B cell (primary cell): ENCODE measurements at regions of chr15 and their contacts with region 1.

Region 1: GRCh38 chr15:50315814-50316630 is 39.0 kb downstream of the GABPB1 start:
- DNase-seq: peak; percentile 57
- ATAC-seq: no peak
- H3K4me3 ChIP-seq: no peak overlapping the region
- H3K4me3 Mint-ChIP-seq: no peak overlapping the region
- H3K27ac ChIP-seq: no peak overlapping the region
- H3K27ac Mint-ChIP-seq: no peak overlapping the region
- H3K4me1 ChIP-seq: no peaks in the 10 kb centered on the region
- H3K4me1 Mint-ChIP-seq: peaks cover 12% of the 10 kb centered on the region
- H3K27me3 ChIP-seq: no peaks in the 10 kb centered on the region
- H3K27me3 Mint-ChIP-seq: no peaks in the 10 kb centered on the region
- CTCF ChIP-seq: peak; percentile 95

Region 2: DNA sequence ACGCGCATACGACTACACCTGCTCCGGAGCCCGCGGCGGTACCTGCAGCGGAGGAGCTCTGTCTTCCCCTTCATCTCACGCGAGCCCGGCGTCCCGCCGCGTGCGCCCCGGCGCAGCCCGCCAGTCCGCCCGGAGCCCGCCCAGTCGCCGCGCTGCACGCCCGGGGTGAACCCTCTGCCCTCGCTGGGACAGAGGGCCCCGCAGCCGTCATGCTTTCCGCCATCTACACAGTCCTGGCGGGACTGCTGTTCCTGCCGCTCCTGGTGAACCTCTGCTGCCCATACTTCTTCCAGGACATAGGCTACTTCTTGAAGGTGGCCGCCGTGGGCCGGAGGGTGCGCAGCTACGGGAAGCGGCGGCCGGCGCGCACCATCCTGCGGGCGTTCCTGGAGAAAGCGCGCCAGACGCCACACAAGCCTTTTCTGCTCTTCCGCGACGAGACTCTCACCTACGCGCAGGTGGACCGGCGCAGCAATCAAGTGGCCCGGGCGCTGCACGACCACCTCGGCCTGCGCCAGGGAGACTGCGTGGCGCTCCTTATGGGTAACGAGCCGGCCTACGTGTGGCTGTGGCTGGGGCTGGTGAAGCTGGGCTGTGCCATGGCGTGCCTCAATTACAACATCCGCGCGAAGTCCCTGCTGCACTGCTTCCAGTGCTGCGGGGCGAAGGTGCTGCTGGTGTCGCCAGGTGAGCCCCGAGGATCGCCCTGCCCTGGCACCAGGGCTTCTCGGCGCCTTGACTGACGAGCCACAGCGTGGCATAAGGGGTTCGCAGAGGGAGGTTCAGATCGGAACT is 133.6 kb before region 1 on chr15:
- CTCF ChIA-PET with region 1: interaction called, 8 read pairs
- POLR2A ChIA-PET with region 1: no interaction called
- intact Hi-C with region 1: loop called (anchors 2 kb)
- DNase-seq: peak; percentile 60
- ATAC-seq: no peak
- H3K4me3 ChIP-seq: peak overlapping the region; percentile 35 to 58 (median 49)
- H3K4me3 Mint-ChIP-seq: peak overlapping the region; percentile 92
- H3K27ac ChIP-seq: no peak overlapping the region
- H3K27ac Mint-ChIP-seq: no peak overlapping the region
- H3K4me1 ChIP-seq: peaks cover 7 to 11% of the 10 kb centered on the region in 2 donors
- H3K4me1 Mint-ChIP-seq: peaks cover 14% of the 10 kb centered on the region
- H3K27me3 ChIP-seq: peaks cover 0 to 17% (median 5%) of the 10 kb centered on the region in 4 experiments
- H3K27me3 Mint-ChIP-seq: peaks cover 32% of the 10 kb centered on the region
- CTCF ChIP-seq: no peak

Region 3: DNA sequence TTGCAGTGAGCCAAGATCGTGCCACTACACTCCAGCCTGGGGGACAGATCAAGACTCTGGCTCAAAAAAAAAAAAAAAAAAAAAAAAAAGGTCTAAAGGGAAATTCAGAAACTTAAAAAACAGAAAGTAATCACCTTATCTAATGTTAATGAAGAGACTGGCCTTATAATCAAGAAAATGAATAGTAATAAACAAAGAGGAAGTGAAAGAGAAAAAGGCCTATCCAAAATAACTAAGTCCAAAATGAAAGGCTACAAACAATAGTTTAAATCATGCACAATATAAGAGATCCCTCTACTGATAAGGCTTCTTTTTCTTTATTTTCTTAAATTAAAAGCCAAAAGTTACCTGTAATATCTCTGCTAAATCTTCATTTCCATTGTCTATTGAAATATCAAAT is 13.4 kb before region 1 on chr15:
- CTCF ChIA-PET with region 1: interaction called, 10 read pairs
- POLR2A ChIA-PET with region 1: no interaction called
- intact Hi-C with region 1: no loop called
- DNase-seq: peak; percentile 18
- ATAC-seq: peak; percentile 36
- H3K4me3 ChIP-seq: no peak overlapping the region
- H3K4me3 Mint-ChIP-seq: no peak overlapping the region
- H3K27ac ChIP-seq: peak overlapping the region in 1 of 2 donors; percentile 62
- H3K27ac Mint-ChIP-seq: no peak overlapping the region
- H3K4me1 ChIP-seq: peaks cover 6 to 8% of the 10 kb centered on the region in 2 donors
- H3K4me1 Mint-ChIP-seq: peaks cover 9% of the 10 kb centered on the region
- H3K27me3 ChIP-seq: no peaks in the 10 kb centered on the region
- H3K27me3 Mint-ChIP-seq: no peaks in the 10 kb centered on the region
- CTCF ChIP-seq: no peak

Region 4: GRCh38 chr15:50365971-50366370 is 49.9 kb after region 1 on chr15:
- CTCF ChIA-PET with region 1: no interaction called
- POLR2A ChIA-PET with region 1: no interaction called
- intact Hi-C with region 1: no loop called
- DNase-seq: no peak
- ATAC-seq: no peak
- H3K4me3 ChIP-seq: no peak overlapping the region
- H3K4me3 Mint-ChIP-seq: no peak overlapping the region
- H3K27ac ChIP-seq: no peak overlapping the region
- H3K27ac Mint-ChIP-seq: peak overlapping the region; percentile 60
- H3K4me1 ChIP-seq: peaks cover 8% of the 10 kb centered on the region in 2 donors
- H3K4me1 Mint-ChIP-seq: peaks cover 26% of the 10 kb centered on the region
- H3K27me3 ChIP-seq: no peaks in the 10 kb centered on the region
- H3K27me3 Mint-ChIP-seq: no peaks in the 10 kb centered on the region
- CTCF ChIP-seq: no peak